Gastrocnemius medialis (tissue), 4 donors: ENCODE measurements at regions of chr22 and their contacts with region 1.

Region 1: GRCh38 chr22:42856865-42857704 is at the start of gene ARFGAP3:
- DNase-seq: peak; percentile 86 to 91
- ATAC-seq: peak; percentile 84 to 86
- H3K4me3 ChIP-seq: peak within 1 kb of the TSS; percentile 75 to 90 (median 84)
- H3K27ac ChIP-seq: peak within 1 kb of the TSS; percentile 93 to 99 (median 96)
- H3K4me1 ChIP-seq: peaks cover 32 to 34% of the 10 kb centered on the region in 2 donors
- H3K27me3 ChIP-seq: no peaks in the 10 kb centered on the region
- CTCF ChIP-seq: no peak
- POLR2A ChIP-seq: peak; percentile 96 to 97
- total RNA-seq, gene ARFGAP3: 28.2 to 43.8 (median 36.0) TPM

Region 2: DNA sequence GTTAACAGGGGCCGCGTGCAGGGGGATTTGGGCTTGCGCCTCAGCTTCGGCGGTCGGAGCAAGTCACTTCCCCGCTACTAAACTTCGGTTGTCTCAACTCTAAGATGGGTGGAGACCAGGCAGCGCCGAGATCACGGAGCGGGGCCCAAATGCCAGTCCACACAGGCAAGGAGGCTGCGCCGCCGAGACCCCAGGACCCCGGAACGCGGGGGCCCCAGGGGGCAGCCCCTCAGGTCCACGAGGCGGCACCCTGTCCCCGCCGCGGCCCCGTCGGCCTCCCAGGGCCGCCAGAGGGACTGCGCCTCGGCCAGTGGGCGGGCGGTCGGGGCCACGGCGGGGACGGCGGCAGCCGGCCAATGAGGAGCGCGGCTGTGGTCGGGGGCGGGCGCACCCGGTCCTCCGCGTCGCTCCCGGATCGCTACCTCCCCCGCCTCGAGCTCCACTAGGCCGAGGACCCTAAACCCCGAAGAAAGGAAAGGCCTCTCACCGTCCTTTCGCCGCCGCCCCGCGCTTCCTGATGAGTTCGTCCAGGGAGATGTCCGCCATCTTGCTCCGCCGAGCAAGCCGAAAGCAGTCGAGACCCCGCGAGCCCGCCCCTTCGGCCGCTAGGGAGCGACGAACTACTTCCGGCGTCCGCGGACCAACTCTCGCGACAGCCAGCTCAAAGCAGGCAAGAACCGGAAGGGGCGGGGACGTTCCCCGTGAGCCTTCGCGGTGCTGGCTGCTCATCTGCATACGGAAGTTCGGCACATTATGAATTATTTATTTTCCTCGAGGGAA is 242.6 kb before region 1 on chr22 and contains the start of gene POLDIP3:
- in situ Hi-C with region 1: no loop called
- intact Hi-C with region 1: loop called (anchors 2 kb)
- DNase-seq: peak; percentile 98 to 99
- ATAC-seq: peak; percentile 82 to 87
- H3K4me3 ChIP-seq: peak within 1 kb of the TSS; percentile 78 to 86 (median 80)
- H3K27ac ChIP-seq: peak within 1 kb of the TSS; percentile 90 to 96 (median 94)
- H3K4me1 ChIP-seq: peaks cover 48 to 55% of the 10 kb centered on the region in 2 donors
- H3K27me3 ChIP-seq: no peaks in the 10 kb centered on the region
- CTCF ChIP-seq: peak; percentile 25 to 58 (median 42)
- POLR2A ChIP-seq: peak; percentile 36 to 86
- total RNA-seq, gene POLDIP3: 19.7 to 28.7 (median 23.0) TPM

Region 3: DNA sequence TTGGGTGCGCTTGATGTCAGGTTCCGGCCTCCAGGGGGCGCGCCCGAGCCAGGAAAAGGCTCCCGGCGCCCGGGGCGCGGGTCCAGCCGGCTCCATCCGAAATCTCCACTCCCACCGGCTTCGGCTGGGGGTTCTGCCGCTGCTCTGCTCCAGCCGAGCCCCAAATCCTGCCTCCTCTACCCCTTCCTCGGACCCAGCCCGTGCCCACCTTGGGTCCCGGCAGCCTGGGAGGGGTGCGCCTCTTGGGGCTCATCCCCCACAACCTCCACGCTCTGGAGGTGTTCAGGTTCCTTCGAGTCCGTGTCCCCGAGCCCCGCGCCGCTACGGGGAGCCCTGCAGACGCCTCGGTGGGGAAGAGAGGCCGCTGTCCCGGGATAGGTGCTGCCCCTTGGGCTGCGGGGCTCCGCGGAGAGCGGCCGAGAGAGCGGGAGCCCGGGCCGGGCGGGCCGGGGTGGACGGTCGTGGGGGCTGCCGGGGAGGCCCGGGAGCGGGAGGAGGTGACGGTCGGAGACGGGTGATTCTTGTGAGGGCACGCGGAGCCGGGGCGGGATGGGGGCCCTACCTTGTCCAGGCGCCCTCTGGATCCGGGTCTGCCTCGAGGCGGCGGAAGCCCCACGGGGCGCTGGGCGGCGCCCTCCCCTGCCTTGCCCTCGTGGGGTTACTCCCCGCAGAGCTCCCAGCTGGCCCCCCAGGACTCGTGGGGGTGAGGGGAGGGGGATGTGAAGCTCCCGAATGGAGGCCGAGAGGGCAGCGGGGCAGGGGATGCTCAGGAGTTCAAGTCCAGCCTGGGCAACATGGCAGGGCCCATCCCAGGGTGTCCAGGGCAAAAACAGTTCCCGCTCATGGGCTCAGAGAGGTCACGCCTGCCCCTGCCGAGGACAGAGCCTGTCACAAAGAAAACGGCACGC is 194.7 kb before region 1 on chr22:
- in situ Hi-C with region 1: no loop called
- intact Hi-C with region 1: loop called (anchors 5 kb)
- DNase-seq: peak; percentile 56 to 75
- ATAC-seq: peak; percentile 88 to 97
- H3K4me3 ChIP-seq: peak overlapping the region; percentile 45 to 68 (median 60)
- H3K27ac ChIP-seq: peak overlapping the region in 2 of 4 donors; percentile 41 to 51
- H3K4me1 ChIP-seq: peaks cover 6 to 9% of the 10 kb centered on the region in 2 donors
- H3K27me3 ChIP-seq: no peaks in the 10 kb centered on the region
- CTCF ChIP-seq: peak; percentile 70 to 94 (median 86)
- POLR2A ChIP-seq: no peak

Region 4: GRCh38 chr22:42794551-42795510 is 62.3 kb before region 1 on chr22:
- in situ Hi-C with region 1: no loop called
- intact Hi-C with region 1: loop called (anchors 5 kb)
- DNase-seq: no peak
- ATAC-seq: no peak
- H3K4me3 ChIP-seq: no peak overlapping the region
- H3K27ac ChIP-seq: peak overlapping the region in 1 of 4 donors; percentile 94
- H3K4me1 ChIP-seq: peaks cover 17 to 33% of the 10 kb centered on the region in 2 donors
- H3K27me3 ChIP-seq: no peaks in the 10 kb centered on the region
- CTCF ChIP-seq: no peak
- POLR2A ChIP-seq: no peak

Region 5: GRCh38 chr22:42829302-42829701 is 27.8 kb before region 1 on chr22:
- in situ Hi-C with region 1: no loop called
- intact Hi-C with region 1: no loop called
- DNase-seq: no peak
- ATAC-seq: no peak
- H3K4me3 ChIP-seq: no peak overlapping the region
- H3K27ac ChIP-seq: no peak overlapping the region
- H3K4me1 ChIP-seq: no peaks in the 10 kb centered on the region
- H3K27me3 ChIP-seq: no peaks in the 10 kb centered on the region
- CTCF ChIP-seq: no peak
- POLR2A ChIP-seq: no peak

Region 6: DNA sequence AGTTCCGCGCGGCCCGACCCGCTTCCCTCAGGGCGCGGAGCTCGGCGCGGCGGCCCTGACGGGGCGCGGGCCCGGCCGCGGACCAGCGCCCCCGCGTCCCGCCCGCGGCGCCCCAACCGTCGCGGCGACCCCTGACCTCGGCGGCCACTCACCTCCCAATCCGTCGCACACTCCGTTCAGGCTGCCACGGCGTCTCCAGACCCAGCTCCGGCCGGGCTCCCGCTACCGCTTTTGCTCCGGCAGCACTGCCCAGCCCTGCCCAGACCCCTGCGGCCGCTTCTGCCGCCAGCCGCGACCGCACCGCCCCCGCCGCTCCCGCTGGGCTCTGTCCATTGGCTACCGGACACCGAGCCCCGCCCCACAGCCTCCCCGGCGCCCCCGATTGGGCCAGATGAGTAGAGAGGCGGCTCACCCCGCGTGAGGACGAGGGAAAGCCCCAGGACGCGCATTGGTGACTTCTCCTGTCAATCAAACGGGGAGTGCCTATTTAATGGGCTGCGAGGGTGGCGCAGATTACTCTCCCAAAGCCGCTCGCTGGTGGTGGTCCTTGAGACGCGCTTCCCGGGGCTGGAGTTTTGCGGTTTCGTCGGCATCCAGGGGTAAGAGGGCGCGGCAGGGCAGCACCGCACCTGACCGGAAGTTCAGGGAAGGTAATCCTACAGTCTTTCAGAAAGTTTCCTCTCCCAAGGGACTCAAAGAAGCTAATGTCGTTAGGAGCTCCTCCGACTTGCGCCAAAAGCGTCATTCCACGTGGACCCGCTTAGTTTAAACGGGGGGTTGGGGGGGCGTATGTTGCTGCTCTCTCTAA is 158.0 kb after region 1 on chr22 and contains the start of gene PACSIN2:
- in situ Hi-C with region 1: no loop called
- intact Hi-C with region 1: loop called (anchors 2 kb)
- DNase-seq: peak; percentile 99 to 100
- ATAC-seq: peak; percentile 89 to 91
- H3K4me3 ChIP-seq: peak within 1 kb of the TSS; percentile 86 to 97 (median 92)
- H3K27ac ChIP-seq: peak within 1 kb of the TSS; percentile 75 to 90 (median 82)
- H3K4me1 ChIP-seq: peaks cover 16 to 20% of the 10 kb centered on the region in 2 donors
- H3K27me3 ChIP-seq: no peaks in the 10 kb centered on the region
- CTCF ChIP-seq: no peak
- POLR2A ChIP-seq: peak; percentile 94 to 98
- total RNA-seq, gene PACSIN2: 37.3 to 45.9 (median 39.8) TPM